ENCODE measurements at regions of chr12 and their contacts with region 1.

Region 1: GRCh38 chr12:110280779-110281548 is at the start of gene ATP2A2:
- DNase-seq: peak; percentile 64 to 90
- H3K4me3 ChIP-seq: peak within 1 kb of the TSS; percentile 96
- H3K27ac ChIP-seq: peak within 1 kb of the TSS; percentile 85
- H3K4me1 ChIP-seq: peaks cover 33% of the 10 kb centered on the region
- H3K27me3 ChIP-seq: no peaks in the 10 kb centered on the region
- CTCF ChIP-seq: no peak
- total RNA-seq, gene ATP2A2: 127 and 154 TPM in 2 replicates

Region 2: GRCh38 chr12:110100315-110100970 is 180.5 kb before region 1 on chr12:
- CTCF ChIA-PET with region 1: no interaction called
- POLR2A ChIA-PET with region 1: no interaction called
- intact Hi-C with region 1: loop called (anchors 1 kb)
- DNase-seq: peak; percentile 53 to 60
- H3K4me3 ChIP-seq: no peak overlapping the region
- H3K27ac ChIP-seq: no peak overlapping the region
- H3K4me1 ChIP-seq: no peaks in the 10 kb centered on the region
- H3K27me3 ChIP-seq: no peaks in the 10 kb centered on the region
- CTCF ChIP-seq: peak; percentile 97

Region 3: DNA sequence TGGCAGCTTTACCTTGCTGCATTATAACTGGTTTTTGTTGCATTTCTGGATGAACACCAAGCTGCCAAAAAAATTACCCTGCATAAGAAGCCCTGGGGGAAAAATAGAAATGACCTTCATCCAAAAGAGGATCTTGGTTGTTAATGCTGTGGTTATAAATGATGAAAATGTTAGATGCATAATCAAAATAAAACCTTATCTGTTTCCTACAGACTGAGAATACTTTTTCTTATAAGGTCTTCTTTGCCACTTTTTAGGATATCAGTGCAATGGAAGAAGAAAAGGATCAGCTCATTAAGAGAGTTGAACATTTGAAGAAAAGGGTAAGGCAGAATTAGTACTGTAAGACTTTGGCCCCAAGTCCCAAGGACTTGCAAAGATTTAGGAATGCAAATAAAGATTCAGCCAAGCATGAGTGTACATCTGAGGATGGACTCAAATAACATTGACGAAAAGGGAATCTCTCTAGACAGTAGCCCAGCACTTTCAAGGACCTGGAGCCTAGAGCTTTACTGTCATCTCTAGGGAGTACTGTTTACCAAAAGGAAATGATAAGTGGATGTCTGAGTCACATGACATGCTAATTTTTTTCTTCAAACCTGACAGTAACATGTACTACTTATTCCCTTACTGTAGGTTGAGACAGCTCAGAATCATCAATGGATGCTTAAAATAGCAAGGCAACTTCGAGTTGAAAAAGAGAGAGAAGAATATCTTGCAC is 146.1 kb before region 1 on chr12:
- CTCF ChIA-PET with region 1: no interaction called
- POLR2A ChIA-PET with region 1: interaction called, 12 read pairs
- intact Hi-C with region 1: no loop called
- DNase-seq: no peak
- H3K4me3 ChIP-seq: no peak overlapping the region
- H3K27ac ChIP-seq: no peak overlapping the region
- H3K4me1 ChIP-seq: no peaks in the 10 kb centered on the region
- H3K27me3 ChIP-seq: no peaks in the 10 kb centered on the region
- CTCF ChIP-seq: no peak

Region 4: GRCh38 chr12:110224379-110225304 is 56.3 kb before region 1 on chr12:
- CTCF ChIA-PET with region 1: interaction called, 3 read pairs
- POLR2A ChIA-PET with region 1: interaction called, 4 read pairs
- intact Hi-C with region 1: loop called (anchors 1 kb)
- DNase-seq: peak in 1 of 2 experiments; percentile 64
- H3K4me3 ChIP-seq: peak overlapping the region; percentile 10; the same call in 1 of the 2 replicates
- H3K27ac ChIP-seq: peak overlapping the region; percentile 79
- H3K4me1 ChIP-seq: peaks cover 34% of the 10 kb centered on the region
- H3K27me3 ChIP-seq: no peaks in the 10 kb centered on the region
- CTCF ChIP-seq: peak; percentile 46

Region 5: DNA sequence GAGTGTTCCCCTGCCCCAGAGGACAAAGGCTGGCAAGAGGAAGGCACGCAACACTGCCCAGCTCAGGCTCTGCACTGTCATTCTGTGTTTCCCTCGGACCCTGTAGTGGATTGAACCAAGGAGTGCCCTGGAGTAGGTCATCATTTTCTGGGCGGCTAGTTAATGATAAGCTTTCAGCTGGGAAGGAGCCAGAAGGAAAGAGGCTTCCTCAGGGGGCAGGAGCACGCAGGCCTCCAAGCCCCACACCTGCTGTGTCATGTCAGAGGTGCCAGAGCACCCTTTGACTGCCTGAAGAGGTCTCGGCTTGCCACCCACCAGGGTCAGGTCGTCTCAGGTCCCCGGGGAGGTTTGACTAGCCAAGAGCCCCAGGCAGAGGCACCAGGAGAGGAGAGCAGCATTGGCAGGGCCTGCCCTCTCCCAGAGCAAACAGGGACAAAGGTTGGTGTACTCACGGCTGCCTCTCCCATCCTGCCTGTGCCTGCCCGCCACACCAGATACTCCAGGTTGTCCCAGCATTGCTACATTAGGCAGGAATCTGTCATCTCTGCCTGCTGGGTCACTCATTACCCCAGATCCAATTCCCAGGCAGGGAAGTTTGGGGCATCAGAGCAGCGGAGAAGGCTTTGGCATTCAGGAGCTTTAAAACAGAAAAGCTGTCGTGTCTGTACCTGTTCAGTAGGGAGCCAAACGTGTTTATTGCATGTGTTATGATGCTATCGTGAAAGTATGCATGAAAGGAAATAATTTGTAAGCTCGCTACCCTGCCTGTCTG is 33.4 kb before region 1 on chr12:
- CTCF ChIA-PET with region 1: no interaction called
- POLR2A ChIA-PET with region 1: interaction called, 6 read pairs
- intact Hi-C with region 1: loop called (anchors 2 kb)
- DNase-seq: peak; percentile 71 to 89
- H3K4me3 ChIP-seq: peak overlapping the region; percentile 41
- H3K27ac ChIP-seq: peak overlapping the region; percentile 95
- H3K4me1 ChIP-seq: peaks cover 46% of the 10 kb centered on the region
- H3K27me3 ChIP-seq: no peaks in the 10 kb centered on the region
- CTCF ChIP-seq: no peak

Measured in PC-9 (cell line).